ENCODE measurements at regions of chr15 and their contacts with region 1.

Region 1: DNA sequence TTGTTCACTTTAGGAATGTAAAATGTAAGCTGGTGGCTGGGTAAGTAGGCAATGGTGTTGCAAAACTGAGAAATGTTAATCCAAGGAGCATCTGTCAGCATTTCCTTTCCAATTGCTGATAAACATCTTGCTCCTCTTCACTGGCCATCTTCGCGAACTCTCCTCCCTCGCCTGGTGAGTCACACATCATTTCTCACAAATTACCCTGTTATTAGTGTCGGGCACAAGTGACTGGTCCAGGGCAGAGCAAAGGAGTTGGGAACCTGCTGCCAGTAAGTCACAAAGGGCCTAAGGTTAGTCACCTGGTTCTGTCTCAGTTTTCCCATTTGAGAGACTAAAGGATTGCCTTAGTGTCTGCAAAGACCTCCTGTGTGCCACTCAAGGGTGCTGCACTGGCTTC is 13.0 kb downstream of the CERS3 start:
- DNase-seq: peak; percentile 22 to 53
- ATAC-seq: peak; percentile 57 to 71 (median 70)
- H3K4me3 ChIP-seq: no peak overlapping the region
- H3K27ac ChIP-seq: peak overlapping the region; percentile 92
- H3K4me1 ChIP-seq: peaks cover 36% of the 10 kb centered on the region
- H3K27me3 ChIP-seq: no peaks in the 10 kb centered on the region
- CTCF ChIP-seq: no peak

Region 2: GRCh38 chr15:100338971-100339444 is 176.8 kb before region 1 on chr15:
- intact Hi-C with region 1: no loop called
- DNase-seq: peak; percentile 49 to 73
- ATAC-seq: peak; percentile 31 to 68 (median 44)
- H3K4me3 ChIP-seq: peak overlapping the region; percentile 95
- H3K27ac ChIP-seq: no peak overlapping the region
- H3K4me1 ChIP-seq: peaks cover 9% of the 10 kb centered on the region
- H3K27me3 ChIP-seq: no peaks in the 10 kb centered on the region
- CTCF ChIP-seq: peak; percentile 64

Region 3: GRCh38 chr15:100438570-100438969 is 77.2 kb before region 1 on chr15:
- intact Hi-C with region 1: loop called in 1 of 2 experiments (anchors 5 kb)
- DNase-seq: peak; percentile 62 to 83
- ATAC-seq: peak in 2 of 4 donors; percentile 27 to 54
- H3K4me3 ChIP-seq: no peak overlapping the region
- H3K27ac ChIP-seq: no peak overlapping the region
- H3K4me1 ChIP-seq: peaks cover 10% of the 10 kb centered on the region
- H3K27me3 ChIP-seq: no peaks in the 10 kb centered on the region
- CTCF ChIP-seq: no peak

Region 4: GRCh38 chr15:100471933-100472332 is 43.8 kb before region 1 on chr15:
- intact Hi-C with region 1: loop called in 1 of 2 experiments (anchors 5 kb)
- DNase-seq: no peak
- ATAC-seq: no peak
- H3K4me3 ChIP-seq: no peak overlapping the region
- H3K27ac ChIP-seq: no peak overlapping the region
- H3K4me1 ChIP-seq: peaks cover 5% of the 10 kb centered on the region
- H3K27me3 ChIP-seq: no peaks in the 10 kb centered on the region
- CTCF ChIP-seq: no peak

Region 5: DNA sequence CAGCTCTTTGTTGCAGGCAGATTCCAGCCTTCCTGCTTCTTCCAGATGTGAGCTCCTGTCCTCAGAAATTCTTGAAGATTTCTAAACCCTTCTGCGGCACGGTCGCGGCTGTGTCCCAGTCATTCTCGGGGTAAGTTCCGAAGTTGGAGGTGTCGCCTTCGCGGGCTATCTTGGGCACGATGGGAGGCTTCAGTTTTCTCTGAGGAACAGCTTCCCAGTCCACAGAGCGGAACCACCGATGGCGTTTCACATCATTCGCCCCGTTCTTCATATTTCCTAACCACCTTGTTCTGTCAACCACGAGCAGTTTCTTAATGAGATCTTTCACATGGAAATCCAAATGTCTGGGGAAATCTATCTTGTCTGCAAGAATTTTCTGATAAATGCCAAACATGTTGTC is 37.7 kb after region 1 on chr15:
- intact Hi-C with region 1: no loop called
- DNase-seq: no peak
- ATAC-seq: no peak
- H3K4me3 ChIP-seq: no peak overlapping the region
- H3K27ac ChIP-seq: no peak overlapping the region
- H3K4me1 ChIP-seq: no peaks in the 10 kb centered on the region
- H3K27me3 ChIP-seq: no peaks in the 10 kb centered on the region
- CTCF ChIP-seq: no peak